ENCODE measurements at regions of chr11 and their contacts with region 1.

Region 1: GRCh38 chr11:32213223-32213622 is 122.3 kb downstream of the RCN1 start:
- DNase-seq: no peak
- H3K4me3 ChIP-seq: no peak overlapping the region
- H3K27ac ChIP-seq: no peak overlapping the region
- H3K4me1 ChIP-seq: no peaks in the 10 kb centered on the region
- H3K27me3 ChIP-seq: no peaks in the 10 kb centered on the region
- CTCF ChIP-seq: no peak
- EP300 ChIP-seq: no peak
- POLR2A ChIP-seq: no peak
- RAD21 ChIP-seq: no peak

Region 2: GRCh38 chr11:32198053-32198452 is 15.2 kb before region 1 on chr11:
- CTCF ChIA-PET with region 1: interaction called, 18 read pairs
- POLR2A ChIA-PET with region 1: no interaction called
- DNase-seq: no peak
- H3K4me3 ChIP-seq: no peak overlapping the region
- H3K27ac ChIP-seq: no peak overlapping the region
- H3K4me1 ChIP-seq: no peaks in the 10 kb centered on the region
- H3K27me3 ChIP-seq: no peaks in the 10 kb centered on the region
- CTCF ChIP-seq: no peak
- EP300 ChIP-seq: no peak
- POLR2A ChIP-seq: no peak
- RAD21 ChIP-seq: no peak

Region 3: DNA sequence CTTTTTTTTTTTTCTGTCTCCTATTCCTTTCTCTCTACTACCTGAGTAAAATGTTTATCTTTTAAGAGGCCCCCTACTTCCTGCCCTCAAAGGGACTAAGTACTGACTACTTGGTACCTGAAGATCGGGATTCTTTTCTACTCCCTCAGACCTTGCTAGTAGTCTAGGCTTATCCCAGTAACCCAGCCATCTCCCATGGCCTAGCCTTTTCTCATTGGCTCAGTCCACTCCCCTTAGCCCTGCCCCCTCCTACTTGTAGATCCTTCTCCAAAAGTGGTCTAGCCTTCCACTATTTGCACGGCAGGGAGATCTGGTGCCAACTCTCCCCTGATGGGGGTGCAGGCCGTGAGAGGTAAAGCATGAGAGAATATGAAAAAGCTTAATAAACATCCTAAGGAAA is 11.4 kb after region 1 on chr11:
- CTCF ChIA-PET with region 1: interaction called, 14 read pairs
- POLR2A ChIA-PET with region 1: no interaction called
- DNase-seq: no peak
- H3K4me3 ChIP-seq: no peak overlapping the region
- H3K27ac ChIP-seq: no peak overlapping the region
- H3K4me1 ChIP-seq: no peaks in the 10 kb centered on the region
- H3K27me3 ChIP-seq: no peaks in the 10 kb centered on the region
- CTCF ChIP-seq: no peak
- EP300 ChIP-seq: no peak
- POLR2A ChIP-seq: no peak
- RAD21 ChIP-seq: no peak

Region 4: GRCh38 chr11:32231905-32232493 is 18.8 kb after region 1 on chr11:
- CTCF ChIA-PET with region 1: interaction called, 25 read pairs
- POLR2A ChIA-PET with region 1: no interaction called
- DNase-seq: peak; percentile 23 to 58
- H3K4me3 ChIP-seq: no peak overlapping the region
- H3K27ac ChIP-seq: no peak overlapping the region
- H3K4me1 ChIP-seq: no peaks in the 10 kb centered on the region
- H3K27me3 ChIP-seq: no peaks in the 10 kb centered on the region
- CTCF ChIP-seq: peak; percentile 73 to 93 (median 86)
- EP300 ChIP-seq: no peak
- POLR2A ChIP-seq: no peak
- RAD21 ChIP-seq: peak; percentile 61 to 72

Region 5: DNA sequence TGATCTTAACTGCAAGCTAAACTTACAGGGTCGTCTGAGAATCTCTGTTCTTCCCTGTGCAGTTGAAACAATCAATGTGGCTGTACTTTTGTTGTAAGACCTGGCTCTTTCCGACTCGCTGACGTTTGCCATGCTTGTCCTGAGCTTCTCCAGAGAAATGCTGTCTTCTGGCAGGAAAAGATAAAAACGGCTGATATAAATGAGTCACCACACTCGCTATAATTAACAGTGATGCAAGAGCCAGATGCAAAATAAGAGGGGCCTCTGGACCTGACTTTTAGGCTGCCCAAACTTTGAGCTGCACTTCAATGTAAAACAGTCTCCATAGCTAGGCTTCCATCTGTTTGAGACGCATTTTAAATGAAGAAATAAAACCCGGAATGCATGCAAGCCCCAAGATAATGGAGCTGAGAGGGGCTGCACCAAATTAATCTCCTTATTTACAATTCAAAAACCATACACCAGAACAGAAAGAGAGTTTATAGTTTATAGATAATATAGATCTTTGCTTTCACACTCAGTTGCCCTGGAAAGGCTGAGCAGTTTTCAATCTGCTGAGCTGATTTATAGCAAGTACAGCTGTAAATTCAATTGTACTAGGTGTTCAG is 173.7 kb after region 1 on chr11:
- CTCF ChIA-PET with region 1: no interaction called
- POLR2A ChIA-PET with region 1: no interaction called
- DNase-seq: no peak
- H3K4me3 ChIP-seq: no peak overlapping the region
- H3K27ac ChIP-seq: no peak overlapping the region
- H3K4me1 ChIP-seq: peaks cover 0 to 2% (median 0%) of the 10 kb centered on the region in 4 experiments; a peak in 1 of 7 replicates
- H3K27me3 ChIP-seq: peaks cover 0 to 3% (median 0%) of the 10 kb centered on the region in 4 experiments; a peak in 2 of 7 replicates
- CTCF ChIP-seq: no peak
- EP300 ChIP-seq: no peak
- POLR2A ChIP-seq: no peak
- RAD21 ChIP-seq: no peak